ENCODE measurements at regions of chr18 and their contacts with region 1.

Region 1: GRCh38 chr18:32072321-32072720 is 19.4 kb upstream of the RNF138 start:
- DNase-seq: peak in 10 of 35 experiments; percentile 4 to 62 (median 10)
- ATAC-seq: peak; percentile 61 to 78 (median 69)
- H3K4me3 ChIP-seq: no peak overlapping the region
- H3K4me3 Mint-ChIP-seq: no peak overlapping the region
- H3K27ac ChIP-seq: no peak overlapping the region
- H3K27ac Mint-ChIP-seq: peak overlapping the region; percentile 49 to 74
- H3K4me1 ChIP-seq: peaks cover 0 to 2% of the 10 kb centered on the region in 2 experiments
- H3K4me1 Mint-ChIP-seq: peaks cover 10 to 18% (median 14%) of the 10 kb centered on the region in 3 donors
- H3K27me3 ChIP-seq: no peaks in the 10 kb centered on the region
- H3K27me3 Mint-ChIP-seq: no peaks in the 10 kb centered on the region

Region 2: DNA sequence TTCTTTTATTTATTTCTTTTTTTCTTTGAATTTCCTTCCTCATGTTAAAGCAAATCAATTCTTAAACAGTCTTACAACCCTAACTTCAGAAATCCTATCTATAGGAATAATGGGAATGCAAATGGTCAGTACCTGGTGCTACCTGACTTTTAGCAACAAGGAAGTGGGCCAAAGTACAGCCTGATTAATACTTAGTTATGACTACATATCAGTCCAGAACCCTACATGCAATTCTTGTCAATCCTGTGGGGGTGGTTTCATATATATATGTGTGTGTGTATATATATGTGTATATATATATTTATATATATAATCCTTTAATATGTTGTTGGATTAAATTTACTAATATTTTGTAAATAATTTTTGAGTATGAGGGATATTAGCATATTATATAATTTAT is 114.6 kb before region 1 on chr18:
- CTCF ChIA-PET with region 1: no interaction called
- POLR2A ChIA-PET with region 1: no interaction called
- DNase-seq: no peak
- ATAC-seq: no peak
- H3K4me3 ChIP-seq: no peak overlapping the region
- H3K4me3 Mint-ChIP-seq: no peak overlapping the region
- H3K27ac ChIP-seq: no peak overlapping the region
- H3K27ac Mint-ChIP-seq: no peak overlapping the region
- H3K4me1 ChIP-seq: no peaks in the 10 kb centered on the region
- H3K4me1 Mint-ChIP-seq: peaks cover 0 to 2% (median 0%) of the 10 kb centered on the region in 3 donors
- H3K27me3 ChIP-seq: peaks cover 0 to under 1% of the 10 kb centered on the region in 2 experiments
- H3K27me3 Mint-ChIP-seq: no peaks in the 10 kb centered on the region

Region 3: DNA sequence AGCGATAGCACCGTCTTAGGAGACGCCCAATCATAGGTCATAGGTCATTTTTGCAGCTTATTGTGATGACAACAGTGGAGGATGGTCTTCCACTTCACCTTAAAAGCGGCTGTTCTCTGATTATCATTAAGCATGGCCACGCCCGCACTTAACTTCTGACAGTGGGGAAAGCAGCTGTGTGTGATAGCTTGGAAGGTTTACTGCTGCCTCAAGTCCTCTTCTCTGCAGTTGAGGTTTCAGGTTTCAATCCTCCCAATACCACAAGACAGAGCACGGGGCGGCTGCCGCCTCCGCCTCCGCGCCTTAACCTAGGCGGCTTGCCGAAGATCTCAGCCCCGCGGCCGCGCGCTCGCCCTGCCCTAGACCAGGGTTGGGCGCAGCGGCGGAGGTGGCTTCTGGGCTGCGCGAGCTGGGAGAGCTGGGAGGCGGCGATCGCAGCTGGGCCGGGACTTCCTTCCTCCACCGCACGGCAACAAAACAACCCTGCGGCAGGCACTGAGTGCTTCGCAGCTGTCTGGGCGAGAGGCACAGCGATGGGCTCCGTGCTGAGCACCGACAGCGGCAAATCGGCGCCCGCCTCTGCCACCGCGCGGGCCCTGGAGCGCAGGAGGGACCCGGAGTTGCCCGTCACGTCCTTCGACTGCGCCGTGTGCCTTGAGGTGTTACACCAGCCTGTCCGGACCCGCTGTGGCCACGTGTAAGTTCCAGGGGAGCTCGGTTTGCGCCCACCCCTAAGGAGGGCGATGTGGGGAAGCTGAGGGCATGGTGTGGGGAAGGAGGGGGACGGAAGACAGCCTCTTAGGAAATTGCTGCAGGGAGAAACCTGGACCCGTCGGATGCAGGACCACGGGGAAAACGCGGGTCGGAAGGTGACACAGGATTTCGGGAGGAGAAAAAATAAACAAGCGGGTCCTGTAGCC is 53.7 kb before region 1 on chr18 and contains the start of gene RNF125:
- CTCF ChIA-PET with region 1: interaction called, 9 to 12 read pairs
- POLR2A ChIA-PET with region 1: interaction called, 6 to 8 read pairs
- DNase-seq: peak; percentile 86 to 96 (median 90)
- ATAC-seq: peak; percentile 75 to 84 (median 82)
- H3K4me3 ChIP-seq: peak within 1 kb of the TSS; percentile 92 to 100
- H3K4me3 Mint-ChIP-seq: peak within 1 kb of the TSS; percentile 99 to 100 (median 99)
- H3K27ac ChIP-seq: peak within 1 kb of the TSS; percentile 84
- H3K27ac Mint-ChIP-seq: peak within 1 kb of the TSS; percentile 98 to 99
- H3K4me1 ChIP-seq: peaks cover 30 to 41% of the 10 kb centered on the region in 2 experiments
- H3K4me1 Mint-ChIP-seq: peaks cover 45 to 64% (median 49%) of the 10 kb centered on the region in 3 donors
- H3K27me3 ChIP-seq: no peaks in the 10 kb centered on the region
- H3K27me3 Mint-ChIP-seq: no peaks in the 10 kb centered on the region
- total RNA-seq, gene RNF125: 33.6 to 70.1 (median 37.4) TPM

Region 4: GRCh38 chr18:32040936-32041335 is 31.4 kb before region 1 on chr18:
- CTCF ChIA-PET with region 1: interaction called, 3 to 27 read pairs
- POLR2A ChIA-PET with region 1: interaction called in 1 of 2 experiments, 4 read pairs
- DNase-seq: peak in 34 of 35 experiments; percentile 20 to 78 (median 46)
- ATAC-seq: peak; percentile 76 to 96 (median 91)
- H3K4me3 ChIP-seq: peak overlapping the region; percentile 4 to 38
- H3K4me3 Mint-ChIP-seq: peak overlapping the region; percentile 43 to 72 (median 52)
- H3K27ac ChIP-seq: peak overlapping the region; percentile 64
- H3K27ac Mint-ChIP-seq: peak overlapping the region; percentile 91 to 92
- H3K4me1 ChIP-seq: peaks cover 26 to 49% of the 10 kb centered on the region in 2 experiments
- H3K4me1 Mint-ChIP-seq: peaks cover 59 to 67% (median 64%) of the 10 kb centered on the region in 3 donors
- H3K27me3 ChIP-seq: no peaks in the 10 kb centered on the region
- H3K27me3 Mint-ChIP-seq: no peaks in the 10 kb centered on the region

Region 5: GRCh38 chr18:32086861-32087260 is 14.5 kb after region 1 on chr18:
- CTCF ChIA-PET with region 1: interaction called, 5 to 20 read pairs
- POLR2A ChIA-PET with region 1: interaction called, 3 to 7 read pairs
- DNase-seq: no peak
- ATAC-seq: no peak
- H3K4me3 ChIP-seq: no peak overlapping the region
- H3K4me3 Mint-ChIP-seq: no peak overlapping the region
- H3K27ac ChIP-seq: no peak overlapping the region
- H3K27ac Mint-ChIP-seq: peak overlapping the region in 1 of 2 donors; percentile 13
- H3K4me1 ChIP-seq: peaks cover 22 to 35% of the 10 kb centered on the region in 2 experiments
- H3K4me1 Mint-ChIP-seq: peaks cover 40 to 50% (median 49%) of the 10 kb centered on the region in 3 donors
- H3K27me3 ChIP-seq: no peaks in the 10 kb centered on the region
- H3K27me3 Mint-ChIP-seq: peaks cover 0 to 1% of the 10 kb centered on the region in 2 donors